OCI-LY7 (cell line): ENCODE measurements at regions of chr9 and their contacts with region 1.

Region 1: GRCh38 chr9:131046581-131047202 is 37.7 kb downstream of the LAMC3 start:
- DNase-seq: peak; percentile 76
- H3K4me3 ChIP-seq: no peak overlapping the region
- H3K27ac ChIP-seq: no peak overlapping the region
- H3K4me1 ChIP-seq: peaks cover 15% of the 10 kb centered on the region
- CTCF ChIP-seq: peak; percentile 93

Region 2: GRCh38 chr9:130712564-130713285 is 334.0 kb before region 1 on chr9:
- CTCF ChIA-PET with region 1: no interaction called
- POLR2A ChIA-PET with region 1: no interaction called
- intact Hi-C with region 1: loop called (anchors 10 kb)
- DNase-seq: peak; percentile 97
- H3K4me3 ChIP-seq: peak overlapping the region; percentile 81
- H3K27ac ChIP-seq: peak overlapping the region; percentile 72
- H3K4me1 ChIP-seq: peaks cover 25% of the 10 kb centered on the region
- CTCF ChIP-seq: no peak

Region 3: GRCh38 chr9:130866474-130866965 is 180.2 kb before region 1 on chr9:
- CTCF ChIA-PET with region 1: no interaction called
- POLR2A ChIA-PET with region 1: no interaction called
- intact Hi-C with region 1: loop called (anchors 1 kb)
- DNase-seq: peak; percentile 63
- H3K4me3 ChIP-seq: no peak overlapping the region
- H3K27ac ChIP-seq: no peak overlapping the region
- H3K4me1 ChIP-seq: peaks cover 12% of the 10 kb centered on the region
- CTCF ChIP-seq: peak; percentile 94

Region 4: GRCh38 chr9:130997925-130998596 is 48.6 kb before region 1 on chr9:
- CTCF ChIA-PET with region 1: interaction called, 3 read pairs
- POLR2A ChIA-PET with region 1: no interaction called
- intact Hi-C with region 1: loop called (anchors 5 kb)
- DNase-seq: peak; percentile 44
- H3K4me3 ChIP-seq: no peak overlapping the region
- H3K27ac ChIP-seq: no peak overlapping the region
- H3K4me1 ChIP-seq: no peaks in the 10 kb centered on the region
- CTCF ChIP-seq: peak; percentile 77